ENCODE measurements at regions of chr4 and their contacts with region 1.

Region 1: DNA sequence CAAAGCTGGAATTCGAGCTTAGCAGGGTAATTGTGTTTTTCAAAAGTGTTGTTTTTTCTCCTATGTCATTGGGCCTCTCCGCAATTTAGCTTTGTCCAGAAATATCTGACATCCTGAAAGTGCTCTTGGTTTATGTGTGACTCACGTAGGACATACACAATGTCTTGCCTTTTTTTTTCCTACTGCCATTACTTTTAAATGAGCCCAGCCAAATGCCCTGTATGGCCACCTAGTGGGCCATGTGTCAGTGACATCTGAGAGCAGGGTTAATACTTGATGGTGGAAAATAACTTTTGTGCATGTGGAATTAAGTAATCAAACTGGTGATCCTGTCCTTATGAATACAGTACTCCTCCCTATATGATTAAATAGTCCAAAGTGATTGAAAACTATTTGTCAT is 1411.1 kb upstream of the TENM3 start:
- DNase-seq: no peak
- H3K4me3 ChIP-seq: no peak overlapping the region
- CTCF ChIP-seq: peak; percentile 25

Region 2: GRCh38 chr4:180664766-180665368 is 167.2 kb before region 1 on chr4:
- in situ Hi-C with region 1: loop called (anchors 10 kb)
- DNase-seq: peak; percentile 91
- H3K4me3 ChIP-seq: no peak overlapping the region
- CTCF ChIP-seq: peak; percentile 79

Region 3: GRCh38 chr4:180745019-180745418 is 87.1 kb before region 1 on chr4:
- in situ Hi-C with region 1: no loop called
- DNase-seq: no peak
- H3K4me3 ChIP-seq: no peak overlapping the region
- CTCF ChIP-seq: no peak

Region 4: DNA sequence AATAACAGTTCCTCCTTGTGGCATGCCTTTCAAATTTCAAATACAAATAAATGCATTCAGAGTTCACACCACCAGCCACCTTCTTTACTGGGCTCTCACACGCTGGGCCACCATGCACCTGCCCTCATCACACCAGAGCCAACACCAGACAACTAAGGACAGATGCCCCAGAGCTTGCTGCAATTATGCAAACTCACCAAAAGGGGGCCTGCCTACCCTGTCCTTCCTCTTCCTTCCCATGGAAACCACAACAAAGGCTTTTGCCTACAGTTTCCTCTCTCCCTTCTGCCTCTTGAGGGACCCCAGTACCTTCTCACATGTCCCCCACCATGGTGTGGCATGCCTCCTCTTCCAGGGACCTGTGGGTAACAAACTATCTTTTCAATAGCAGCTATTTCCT is 77.2 kb after region 1 on chr4:
- in situ Hi-C with region 1: no loop called
- DNase-seq: no peak
- H3K4me3 ChIP-seq: no peak overlapping the region
- CTCF ChIP-seq: peak; percentile 17

Measured in astrocyte of the cerebellum (primary cell).